ENCODE measurements at regions of chr19 and their contacts with region 1.

Region 1: DNA sequence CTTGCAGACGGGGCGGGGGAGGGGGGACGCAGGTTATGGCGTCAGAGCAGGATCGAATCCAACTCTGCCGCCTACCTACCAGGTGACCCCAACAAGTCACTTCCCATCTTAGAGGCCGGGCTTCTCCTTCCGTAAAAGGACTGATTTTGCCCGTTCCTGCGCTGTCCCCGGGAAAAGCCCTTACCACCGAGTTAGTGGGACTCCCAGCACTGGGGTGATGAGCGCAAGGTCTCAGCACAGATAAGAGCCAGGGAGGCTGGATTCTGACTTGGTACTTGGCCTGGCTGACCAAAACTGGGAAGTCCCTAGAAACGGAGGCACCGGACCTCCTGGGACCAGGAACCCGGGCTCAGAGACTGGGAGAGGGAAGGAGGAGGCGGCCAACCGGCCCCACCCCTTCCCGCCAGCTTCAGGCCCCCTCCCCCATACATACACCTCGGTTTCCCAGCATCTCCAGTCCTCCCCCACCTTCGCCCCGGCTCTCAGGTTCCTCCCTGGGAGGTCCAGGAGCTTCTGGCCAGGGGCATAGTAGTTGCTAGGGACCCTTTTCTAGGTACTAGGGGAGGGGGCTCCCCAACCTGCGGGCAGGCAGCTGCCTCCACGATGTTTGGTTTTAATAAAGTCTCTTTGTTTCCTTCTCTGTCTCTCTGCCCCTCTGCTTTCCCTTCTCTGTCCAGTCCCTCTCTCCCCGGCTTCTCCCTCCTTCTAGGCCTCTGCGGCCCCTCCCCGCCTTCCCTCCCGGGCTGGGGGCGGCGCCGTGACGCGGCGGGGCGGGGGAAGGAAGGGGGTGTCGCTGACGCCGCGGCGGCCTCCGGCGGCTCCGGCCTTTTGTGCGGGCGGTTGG is at the start of gene GRAMD1A:
- DNase-seq: peak; percentile 87
- H3K4me3 Mint-ChIP-seq: peak within 1 kb of the TSS; percentile 100
- H3K27ac Mint-ChIP-seq: peak within 1 kb of the TSS; percentile 99
- H3K4me1 Mint-ChIP-seq: peaks cover 66% of the 10 kb centered on the region
- H3K27me3 Mint-ChIP-seq: no peaks in the 10 kb centered on the region
- total RNA-seq, gene GRAMD1A: 204 to 223 TPM

Region 2: GRCh38 chr19:34733826-34734600 is 265.7 kb before region 1 on chr19 and contains the start of gene ZNF181:
- CTCF ChIA-PET with region 1: no interaction called
- POLR2A ChIA-PET with region 1: no interaction called
- intact Hi-C with region 1: loop called (anchors 5 kb)
- DNase-seq: peak; percentile 89
- H3K4me3 Mint-ChIP-seq: peak within 1 kb of the TSS; percentile 86
- H3K27ac Mint-ChIP-seq: peak within 1 kb of the TSS; percentile 97
- H3K4me1 Mint-ChIP-seq: peaks cover 19% of the 10 kb centered on the region
- H3K27me3 Mint-ChIP-seq: peaks cover 1% of the 10 kb centered on the region
- total RNA-seq, gene ZNF181: 4.2 to 4.6 TPM

Region 3: DNA sequence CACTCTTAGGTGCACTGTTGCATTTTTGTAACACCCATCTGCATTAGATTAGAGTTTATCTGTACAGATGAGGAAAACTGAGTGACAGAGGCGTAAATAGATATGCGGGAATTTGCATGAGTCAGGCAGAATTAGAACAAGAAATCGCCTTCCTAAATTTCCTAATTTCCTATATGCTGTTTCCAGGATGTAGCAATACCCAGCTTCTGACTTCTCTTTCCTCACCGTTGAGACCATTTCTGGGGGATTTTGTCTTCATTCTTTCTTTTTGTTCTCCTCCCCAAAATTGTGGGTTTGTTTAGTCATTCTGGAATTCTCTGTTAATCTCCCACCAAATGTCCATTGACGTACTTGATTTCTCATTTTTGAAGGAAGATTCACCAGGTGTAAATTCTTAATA is 25.1 kb before region 1 on chr19:
- CTCF ChIA-PET with region 1: interaction called, 21 read pairs
- POLR2A ChIA-PET with region 1: interaction called, 5 read pairs
- intact Hi-C with region 1: loop called (anchors 1 kb)
- DNase-seq: no peak
- H3K4me3 Mint-ChIP-seq: no peak overlapping the region
- H3K27ac Mint-ChIP-seq: no peak overlapping the region
- H3K4me1 Mint-ChIP-seq: peaks cover 27% of the 10 kb centered on the region
- H3K27me3 Mint-ChIP-seq: no peaks in the 10 kb centered on the region

Region 4: DNA sequence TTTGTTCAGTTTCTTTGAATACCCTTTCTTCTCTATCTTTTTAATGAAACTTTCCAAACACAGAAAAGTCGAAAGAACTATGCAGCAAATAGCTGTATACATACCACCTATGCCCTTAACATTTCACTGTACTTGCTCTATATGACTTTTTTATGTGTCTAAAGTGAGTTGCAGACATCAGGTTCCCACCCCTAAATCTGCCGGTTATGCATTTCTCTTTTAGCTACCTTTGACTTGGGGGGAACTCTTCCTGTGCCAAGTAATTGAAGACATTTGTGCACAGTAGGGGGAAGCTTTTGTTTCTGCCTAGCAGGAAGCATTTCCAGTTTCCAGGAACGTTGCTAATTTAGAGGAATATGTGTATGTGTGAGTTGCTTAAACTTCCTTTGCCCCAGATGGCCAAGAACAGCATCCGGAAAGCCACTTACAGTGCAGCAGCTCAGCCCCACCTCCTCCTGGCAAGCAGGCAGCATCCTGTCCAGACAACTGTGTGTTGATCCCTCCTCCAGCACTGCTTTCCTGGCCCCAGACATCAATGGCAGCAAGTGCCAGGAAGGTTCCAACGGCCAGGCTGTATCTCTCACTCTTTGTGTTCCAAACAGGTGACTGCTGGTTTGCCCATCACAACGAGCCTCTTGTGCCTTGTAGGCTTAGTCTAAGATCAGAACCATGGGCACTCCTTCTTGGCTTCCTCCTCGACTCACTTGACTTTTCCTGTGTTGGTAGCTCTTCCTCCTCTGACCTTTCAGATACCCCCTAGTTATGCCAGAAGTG is 14.3 kb before region 1 on chr19:
- CTCF ChIA-PET with region 1: interaction called, 8 read pairs
- POLR2A ChIA-PET with region 1: interaction called, 65 read pairs
- intact Hi-C with region 1: loop called (anchors 1 kb)
- DNase-seq: peak; percentile 60
- H3K4me3 Mint-ChIP-seq: peak overlapping the region; percentile 70
- H3K27ac Mint-ChIP-seq: peak overlapping the region; percentile 77
- H3K4me1 Mint-ChIP-seq: peaks cover 47% of the 10 kb centered on the region
- H3K27me3 Mint-ChIP-seq: no peaks in the 10 kb centered on the region

Region 5: DNA sequence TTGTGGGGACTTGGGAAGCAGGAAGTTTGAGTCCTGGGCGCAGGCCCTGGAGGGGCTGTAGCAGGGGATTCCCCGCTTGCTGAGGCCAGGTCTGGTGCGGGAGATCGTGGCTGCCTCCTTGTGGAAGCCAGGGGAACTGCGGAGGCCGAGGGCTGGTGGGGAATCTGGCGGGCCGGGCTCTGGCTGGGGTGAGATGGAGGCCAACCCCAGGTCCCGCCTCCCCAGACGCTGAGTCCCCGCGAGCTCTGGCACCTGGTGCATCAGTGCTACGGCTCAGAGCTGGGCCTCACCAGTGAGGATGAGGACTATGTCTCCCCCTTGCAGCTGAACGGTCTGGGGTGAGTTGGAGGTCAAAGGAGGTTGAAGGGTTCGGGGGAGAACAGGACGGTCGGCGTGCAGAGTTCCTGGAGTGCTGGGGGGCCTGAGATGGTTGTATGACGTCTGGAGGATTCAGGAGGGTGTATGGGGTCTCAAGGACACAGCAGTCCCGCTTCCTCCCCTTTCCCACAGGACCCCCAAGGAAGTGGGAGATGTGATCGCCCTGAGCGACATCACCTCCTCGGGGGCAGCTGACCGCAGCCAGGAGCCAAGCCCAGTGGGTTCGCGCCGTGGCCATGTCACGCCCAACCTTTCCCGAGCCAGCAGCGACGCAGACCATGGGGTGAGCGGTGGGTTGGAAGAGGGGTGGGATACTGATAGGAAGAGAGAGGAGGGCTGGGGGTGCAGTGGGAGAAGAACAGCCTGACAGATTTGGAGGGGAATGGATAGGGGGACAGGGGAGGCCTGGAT is 13.5 kb after region 1 on chr19:
- CTCF ChIA-PET with region 1: interaction called, 37 read pairs
- POLR2A ChIA-PET with region 1: interaction called, 51 read pairs
- intact Hi-C with region 1: no loop called
- DNase-seq: peak; percentile 88
- H3K4me3 Mint-ChIP-seq: peak overlapping the region; percentile 43
- H3K27ac Mint-ChIP-seq: peak overlapping the region; percentile 87
- H3K4me1 Mint-ChIP-seq: peaks cover 59% of the 10 kb centered on the region
- H3K27me3 Mint-ChIP-seq: no peaks in the 10 kb centered on the region